Ascending aorta (tissue), 2 donors: ENCODE measurements at regions of chr13 and their contacts with region 1.

Region 1: GRCh38 chr13:83065108-83065507 is 817.2 kb downstream of the SLITRK1 start:
- DNase-seq: peak; percentile 29 to 90
- H3K4me3 ChIP-seq: no peak overlapping the region
- H3K27ac ChIP-seq: peak overlapping the region; percentile 54 to 56
- H3K4me1 ChIP-seq: peaks cover 2 to 12% of the 10 kb centered on the region in 2 donors
- H3K27me3 ChIP-seq: no peaks in the 10 kb centered on the region
- CTCF ChIP-seq: no peak

Region 2: DNA sequence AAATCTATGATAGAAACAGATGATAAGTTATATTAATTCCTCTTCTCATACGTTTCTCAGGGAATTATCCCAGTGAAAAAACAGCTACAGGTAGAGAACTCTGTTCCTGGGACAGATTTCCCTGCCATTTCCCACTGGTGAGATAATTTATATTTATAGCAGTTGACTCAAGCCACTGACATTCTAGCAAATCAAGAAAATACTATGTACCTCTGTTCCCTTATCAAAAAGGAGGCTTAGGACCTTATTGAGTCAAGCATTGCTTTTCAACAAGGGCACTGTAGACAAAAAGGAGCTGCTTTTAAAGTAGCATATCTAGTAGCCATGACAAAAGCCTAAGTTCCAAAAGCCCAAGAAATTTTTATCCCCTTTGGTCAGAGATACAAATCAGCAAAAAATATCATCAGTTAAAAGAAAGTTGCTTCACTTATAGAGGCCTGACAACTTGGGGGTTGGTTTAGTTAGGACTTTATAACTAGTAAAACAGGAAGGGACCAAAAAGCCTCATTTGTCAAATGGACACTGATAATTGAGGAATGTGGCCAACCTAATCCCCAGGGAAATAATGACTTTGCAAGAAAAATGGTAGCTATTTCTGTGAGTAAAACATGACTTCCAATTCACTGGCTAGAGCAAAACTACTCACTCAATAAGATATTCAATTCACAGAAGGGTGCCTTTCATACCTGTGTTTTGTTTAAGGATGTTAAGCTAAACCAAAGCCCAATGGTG is 164.6 kb after region 1 on chr13:
- intact Hi-C with region 1: loop called (anchors 5 kb)
- DNase-seq: no peak
- H3K4me3 ChIP-seq: no peak overlapping the region
- H3K27ac ChIP-seq: peak overlapping the region; percentile 41 to 72
- H3K4me1 ChIP-seq: peaks cover 0 to 15% of the 10 kb centered on the region in 2 donors
- H3K27me3 ChIP-seq: no peaks in the 10 kb centered on the region
- CTCF ChIP-seq: no peak